ENCODE measurements at regions of chr18 and their contacts with region 1.

Region 1: DNA sequence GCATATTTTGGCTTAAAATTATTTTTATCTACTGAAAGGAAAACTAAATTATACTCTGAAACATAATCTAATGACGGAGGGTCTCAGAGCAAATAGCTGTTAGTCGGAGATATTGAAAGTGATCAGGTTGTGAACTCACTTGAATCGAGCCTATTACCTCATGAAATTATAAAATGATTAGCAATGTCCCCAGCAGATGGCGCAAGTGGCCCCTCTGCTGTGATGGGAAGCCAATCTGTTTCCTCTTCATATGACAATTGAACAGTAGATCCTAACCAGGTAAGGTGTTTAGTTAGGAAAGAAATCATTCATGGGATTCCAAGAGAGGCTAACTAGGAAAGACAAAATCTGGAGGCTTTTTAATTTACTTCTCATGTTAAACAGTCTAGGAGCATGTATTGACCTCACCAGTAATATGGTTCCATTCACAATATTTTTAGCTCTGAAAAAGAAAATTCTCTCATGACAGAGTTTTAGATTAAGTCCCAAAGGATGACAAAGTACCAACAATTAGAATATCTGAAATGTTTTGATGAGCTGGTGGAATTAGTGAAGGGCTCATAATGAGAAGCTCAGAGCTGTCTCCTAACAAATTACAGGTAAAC is 29.9 kb upstream of the MPPE1 start:
- DNase-seq: peak; percentile 83

Region 2: DNA sequence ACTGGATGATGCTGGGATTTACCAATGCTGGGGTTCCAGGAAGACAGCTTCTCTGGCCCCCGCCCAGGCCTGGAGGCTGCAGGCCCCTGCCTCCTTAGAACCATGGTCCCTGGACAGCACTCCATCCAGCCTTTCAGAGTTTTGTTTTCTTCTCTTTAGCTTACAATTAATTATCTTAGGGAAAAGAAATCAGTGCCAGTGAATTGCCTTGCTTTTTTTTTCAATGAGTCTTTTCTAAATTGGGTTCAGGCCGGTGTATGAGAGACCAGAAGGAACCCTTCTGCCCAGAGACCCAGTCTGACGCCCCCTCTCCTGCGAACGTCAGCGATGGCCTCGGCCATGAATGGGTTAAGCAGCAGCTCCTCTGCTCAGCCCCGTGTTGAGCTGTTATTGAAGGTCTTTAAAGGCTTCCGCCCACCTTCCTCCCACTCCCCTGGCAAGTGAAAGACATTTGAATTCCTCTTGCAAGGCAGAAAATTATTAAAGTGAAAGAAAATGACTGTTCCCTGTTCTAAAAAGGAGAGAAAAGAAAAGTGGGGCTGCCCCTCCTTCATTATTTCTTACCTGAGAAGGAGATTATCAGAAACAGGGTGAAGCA is 152.4 kb before region 1 on chr18:
- intact Hi-C with region 1: no loop called
- DNase-seq: no peak

Region 3: GRCh38 chr18:11995445-11996189 is 57.6 kb after region 1 on chr18:
- intact Hi-C with region 1: loop called (anchors 1 kb)
- DNase-seq: peak; percentile 90

Region 4: GRCh38 chr18:12038639-12039417 is 100.9 kb after region 1 on chr18:
- intact Hi-C with region 1: loop called (anchors 1 kb)
- DNase-seq: peak; percentile 94